Activated CD8-positive, alpha-beta T cell treated with anti-CD3 and anti-CD28 coated beads for 36 hours (primary cell): ENCODE measurements at regions of chr2 and their contacts with region 1.

Region 1: GRCh38 chr2:131673392-131674173 is 145.9 kb downstream of the CCDC74A start:
- DNase-seq: peak; percentile 76
- ATAC-seq: peak; percentile 85
- H3K4me3 Mint-ChIP-seq: no peak overlapping the region
- H3K27ac Mint-ChIP-seq: no peak overlapping the region
- H3K4me1 Mint-ChIP-seq: peaks cover 6% of the 10 kb centered on the region
- H3K27me3 Mint-ChIP-seq: peaks cover 12% of the 10 kb centered on the region
- CTCF ChIP-seq: peak; percentile 83

Region 2: DNA sequence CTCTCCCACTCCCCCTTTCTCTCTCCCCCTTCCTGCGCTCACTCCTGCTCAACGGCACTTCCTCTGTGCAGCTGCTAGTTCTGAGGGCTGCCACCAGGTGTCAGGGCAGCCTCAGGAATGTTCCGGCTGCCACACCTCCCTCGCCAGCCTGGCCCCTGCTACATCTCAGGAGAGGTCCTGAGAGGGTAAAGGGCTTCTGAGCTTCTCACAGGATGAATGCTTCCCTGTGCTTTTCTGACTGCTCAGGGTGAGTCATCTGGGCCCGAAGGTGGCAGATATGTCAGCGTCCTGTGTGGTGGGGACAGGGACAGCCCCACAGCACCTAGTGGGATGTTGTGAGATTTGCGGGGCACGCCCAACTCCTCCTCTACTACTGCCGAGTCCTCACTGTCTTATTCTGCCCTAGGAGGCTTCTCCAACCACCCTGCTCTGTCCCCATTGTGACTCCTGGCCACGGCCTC is 519.5 kb before region 1 on chr2:
- CTCF ChIA-PET with region 1: interaction called, 6 read pairs
- POLR2A ChIA-PET with region 1: no interaction called
- intact Hi-C with region 1: loop called (anchors 5 kb)
- DNase-seq: peak; percentile 95
- ATAC-seq: peak; percentile 98
- H3K4me3 Mint-ChIP-seq: no peak overlapping the region
- H3K27ac Mint-ChIP-seq: peak overlapping the region; percentile 26
- H3K4me1 Mint-ChIP-seq: peaks cover 32% of the 10 kb centered on the region
- H3K27me3 Mint-ChIP-seq: no peaks in the 10 kb centered on the region
- CTCF ChIP-seq: peak; percentile 77

Region 3: DNA sequence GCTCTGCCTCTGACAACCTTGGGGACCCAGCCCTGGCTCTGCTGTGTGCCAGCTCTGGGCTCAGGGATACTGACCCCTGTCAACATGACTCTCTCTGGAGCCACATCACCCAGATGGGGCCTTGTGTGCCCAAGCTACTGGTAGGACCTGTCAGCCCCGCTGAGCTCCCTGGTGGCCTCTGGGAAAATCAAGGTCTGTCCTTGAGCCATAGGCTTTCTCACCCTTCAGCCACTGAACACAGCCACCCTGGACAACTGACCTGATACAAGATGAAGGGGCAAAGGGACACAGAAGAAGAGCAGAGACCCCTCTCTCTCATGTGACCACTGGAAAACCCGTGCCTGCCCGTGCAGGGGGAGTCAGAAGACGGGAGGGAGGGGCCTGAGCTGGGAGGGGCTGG is 138.1 kb before region 1 on chr2:
- CTCF ChIA-PET with region 1: no interaction called
- POLR2A ChIA-PET with region 1: no interaction called
- intact Hi-C with region 1: no loop called
- DNase-seq: no peak
- ATAC-seq: no peak
- H3K4me3 Mint-ChIP-seq: no peak overlapping the region
- H3K27ac Mint-ChIP-seq: no peak overlapping the region
- H3K4me1 Mint-ChIP-seq: no peaks in the 10 kb centered on the region
- H3K27me3 Mint-ChIP-seq: no peaks in the 10 kb centered on the region
- CTCF ChIP-seq: no peak

Region 4: DNA sequence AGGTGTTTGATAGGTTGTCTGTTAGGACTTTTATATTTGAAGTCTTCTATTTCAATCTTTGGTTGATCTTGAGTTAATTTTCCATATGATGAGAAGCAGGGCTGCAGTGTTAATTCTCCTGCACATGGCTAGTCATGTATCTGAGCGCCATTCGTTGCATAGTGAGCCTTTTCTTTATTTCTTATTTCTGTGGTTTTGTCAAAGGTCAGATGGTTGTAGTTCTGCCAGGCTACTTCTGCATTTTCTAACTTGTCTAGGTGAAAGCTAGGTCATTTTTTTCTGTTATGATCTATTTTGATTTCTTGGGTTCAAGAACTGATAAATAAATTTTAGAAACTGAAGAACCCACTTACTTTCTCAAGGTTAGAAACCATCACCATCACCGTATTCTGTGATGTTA is 89.2 kb before region 1 on chr2:
- CTCF ChIA-PET with region 1: no interaction called
- POLR2A ChIA-PET with region 1: no interaction called
- intact Hi-C with region 1: no loop called
- DNase-seq: no peak
- ATAC-seq: no peak
- H3K4me3 Mint-ChIP-seq: no peak overlapping the region
- H3K27ac Mint-ChIP-seq: no peak overlapping the region
- H3K4me1 Mint-ChIP-seq: no peaks in the 10 kb centered on the region
- H3K27me3 Mint-ChIP-seq: peaks cover 22% of the 10 kb centered on the region
- CTCF ChIP-seq: no peak

Region 5: GRCh38 chr2:131659168-131659572 is 14.4 kb before region 1 on chr2:
- CTCF ChIA-PET with region 1: interaction called, 14 read pairs
- POLR2A ChIA-PET with region 1: no interaction called
- intact Hi-C with region 1: no loop called
- DNase-seq: no peak
- ATAC-seq: no peak
- H3K4me3 Mint-ChIP-seq: no peak overlapping the region
- H3K27ac Mint-ChIP-seq: no peak overlapping the region
- H3K4me1 Mint-ChIP-seq: no peaks in the 10 kb centered on the region
- H3K27me3 Mint-ChIP-seq: peaks cover 15% of the 10 kb centered on the region
- CTCF ChIP-seq: no peak

Region 6: DNA sequence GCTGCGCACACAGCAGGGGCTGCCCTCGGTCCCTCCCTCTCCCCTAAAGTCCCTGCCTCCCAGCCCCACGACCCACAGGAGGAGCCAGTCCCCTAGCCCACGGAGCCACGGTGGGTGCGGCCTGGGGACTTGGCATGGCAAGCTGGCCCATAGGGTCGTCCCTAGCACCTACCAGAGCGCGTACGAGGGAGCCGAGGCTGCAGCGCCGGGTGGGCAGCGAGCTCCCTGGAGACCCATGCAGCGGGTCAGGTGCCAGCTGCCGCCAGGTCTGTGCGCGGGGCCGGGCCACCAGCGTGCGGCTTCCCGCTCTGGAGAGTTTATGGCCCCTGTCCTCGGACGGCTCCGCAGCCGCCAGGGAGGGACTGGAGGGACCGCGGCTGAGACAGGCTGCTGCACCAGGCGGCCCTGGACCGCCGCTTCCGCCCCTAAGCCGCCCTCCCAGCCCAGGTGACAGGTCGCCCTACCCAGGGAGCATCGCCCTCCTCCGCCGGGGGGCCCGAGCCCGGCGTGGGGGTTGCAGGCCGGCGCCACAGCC is 127.7 kb after region 1 on chr2:
- CTCF ChIA-PET with region 1: interaction called, 18 read pairs
- POLR2A ChIA-PET with region 1: no interaction called
- intact Hi-C with region 1: loop called (anchors 10 kb)
- DNase-seq: no peak
- ATAC-seq: no peak
- H3K4me3 Mint-ChIP-seq: no peak overlapping the region
- H3K27ac Mint-ChIP-seq: no peak overlapping the region
- H3K4me1 Mint-ChIP-seq: peaks cover 3% of the 10 kb centered on the region
- H3K27me3 Mint-ChIP-seq: peaks cover 9% of the 10 kb centered on the region
- CTCF ChIP-seq: no peak